Tibial artery (tissue), 4 donors: ENCODE measurements at regions of chr4 and their contacts with region 1.

Region 1: GRCh38 chr4:137124278-137124932 is 407.9 kb downstream of the PCDH18 start:
- DNase-seq: no peak
- H3K4me3 ChIP-seq: peak overlapping the region; percentile 48 to 55
- H3K27ac ChIP-seq: peak overlapping the region; percentile 33 to 35
- H3K4me1 ChIP-seq: peaks cover 0 to 4% (median 0%) of the 10 kb centered on the region in 4 donors
- H3K27me3 ChIP-seq: no peaks in the 10 kb centered on the region
- CTCF ChIP-seq: peak; percentile 65 to 71

Region 2: DNA sequence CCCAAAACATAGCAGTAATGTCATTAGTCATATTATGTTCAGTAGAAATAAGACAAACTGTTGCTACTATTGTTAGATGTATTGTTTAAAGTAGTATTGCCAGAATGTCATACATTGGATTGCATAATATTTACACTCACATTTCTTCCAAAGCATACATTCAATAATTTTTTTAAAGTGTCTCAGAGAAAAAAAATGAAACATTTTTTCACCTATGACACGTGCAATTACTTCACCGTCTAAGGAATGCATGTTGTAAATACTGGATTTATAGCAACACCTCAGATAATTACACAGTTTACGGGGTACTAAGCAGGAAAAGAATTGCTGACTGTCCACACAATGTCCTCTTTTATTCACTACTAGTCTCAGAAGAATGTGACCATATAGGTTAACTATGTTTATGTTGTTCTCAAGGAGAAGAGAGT is 245.8 kb after region 1 on chr4:
- intact Hi-C with region 1: no loop called
- DNase-seq: no peak
- H3K4me3 ChIP-seq: no peak overlapping the region
- H3K27ac ChIP-seq: peak overlapping the region in 1 of 2 donors; percentile 53
- H3K4me1 ChIP-seq: peaks cover 0 to 43% (median 18%) of the 10 kb centered on the region in 4 donors
- H3K27me3 ChIP-seq: no peaks in the 10 kb centered on the region
- CTCF ChIP-seq: no peak

Region 3: GRCh38 chr4:137861682-137862081 is 737.3 kb after region 1 on chr4:
- intact Hi-C with region 1: loop called (anchors 5 kb)
- DNase-seq: no peak
- H3K4me3 ChIP-seq: no peak overlapping the region
- H3K27ac ChIP-seq: no peak overlapping the region
- H3K4me1 ChIP-seq: no peaks in the 10 kb centered on the region
- H3K27me3 ChIP-seq: no peaks in the 10 kb centered on the region
- CTCF ChIP-seq: peak; percentile 48 to 52

Region 4: DNA sequence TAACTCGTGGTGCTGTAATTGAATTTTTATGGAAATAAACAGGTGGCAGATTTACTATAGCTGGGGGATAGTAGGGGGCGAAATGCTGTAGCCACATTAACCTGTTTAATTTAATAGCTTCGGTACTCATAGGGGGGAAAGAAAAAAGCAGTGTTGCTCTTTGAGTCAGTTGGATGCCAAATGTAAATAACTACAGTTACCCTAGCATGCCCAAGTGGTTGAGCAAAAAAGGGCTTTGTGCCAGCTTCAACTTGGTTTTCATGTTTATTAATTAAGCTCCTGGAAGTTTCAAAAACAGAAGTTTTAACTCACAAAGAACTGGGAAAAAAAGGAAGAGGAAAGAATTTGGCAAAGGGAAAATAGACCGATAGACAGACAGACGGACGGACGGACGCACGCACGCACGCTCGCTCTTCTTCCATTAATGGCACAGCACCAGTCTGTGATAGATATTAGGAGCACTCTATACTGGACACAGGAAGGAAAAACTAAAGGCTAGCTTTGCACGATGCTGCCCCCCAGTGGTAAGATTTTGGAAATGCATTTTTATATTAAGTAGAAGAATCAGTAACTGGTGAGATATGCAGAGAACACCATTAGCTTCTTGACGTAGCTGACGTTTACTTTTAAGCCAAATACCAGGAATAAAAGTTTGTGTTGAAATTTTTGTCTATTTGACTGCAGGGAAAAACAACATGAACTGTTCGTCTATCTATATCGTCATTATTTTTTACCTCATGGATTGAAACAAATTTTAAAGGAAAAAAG is 965.9 kb after region 1 on chr4:
- intact Hi-C with region 1: loop called (anchors 10 kb)
- DNase-seq: no peak
- H3K4me3 ChIP-seq: peak overlapping the region; percentile 18 to 40
- H3K27ac ChIP-seq: peak overlapping the region in 1 of 2 donors; percentile 22
- H3K4me1 ChIP-seq: peaks cover 0 to 42% (median 20%) of the 10 kb centered on the region in 4 donors
- H3K27me3 ChIP-seq: no peaks in the 10 kb centered on the region
- CTCF ChIP-seq: peak; percentile 72 to 77

Region 5: DNA sequence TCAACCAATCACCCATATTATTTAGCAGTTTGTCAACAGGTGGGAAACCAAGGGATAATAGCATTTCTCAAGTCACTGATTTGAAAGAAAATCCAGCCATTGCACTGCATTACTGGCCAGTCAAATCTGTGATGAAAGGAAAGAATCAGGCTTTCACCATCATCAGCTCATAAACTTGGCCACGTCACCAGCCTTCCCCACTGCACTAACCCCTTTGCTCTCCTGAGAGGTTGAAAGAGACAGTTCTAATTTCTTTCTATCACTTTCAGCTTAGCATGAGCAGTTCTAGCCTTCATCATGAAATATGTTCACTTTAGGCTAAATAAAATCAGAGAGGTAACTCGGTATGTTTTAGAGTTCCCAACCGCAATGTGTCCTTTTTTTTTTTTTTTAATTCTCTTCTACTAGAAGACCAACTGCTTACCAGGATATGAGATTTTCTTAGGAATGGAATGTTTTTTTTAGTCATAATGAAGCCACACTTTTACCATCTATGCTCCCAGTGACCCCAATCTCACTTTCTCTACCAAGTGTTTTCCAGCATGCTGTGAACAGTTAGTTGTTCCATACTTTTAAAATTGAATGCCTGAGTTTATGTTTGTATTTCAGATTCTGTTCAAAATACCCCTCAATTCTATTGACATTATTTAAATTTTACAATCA is 1173.5 kb after region 1 on chr4:
- intact Hi-C with region 1: no loop called
- DNase-seq: no peak
- H3K4me3 ChIP-seq: no peak overlapping the region
- H3K27ac ChIP-seq: no peak overlapping the region
- H3K4me1 ChIP-seq: no peaks in the 10 kb centered on the region
- H3K27me3 ChIP-seq: no peaks in the 10 kb centered on the region
- CTCF ChIP-seq: no peak

Region 6: DNA sequence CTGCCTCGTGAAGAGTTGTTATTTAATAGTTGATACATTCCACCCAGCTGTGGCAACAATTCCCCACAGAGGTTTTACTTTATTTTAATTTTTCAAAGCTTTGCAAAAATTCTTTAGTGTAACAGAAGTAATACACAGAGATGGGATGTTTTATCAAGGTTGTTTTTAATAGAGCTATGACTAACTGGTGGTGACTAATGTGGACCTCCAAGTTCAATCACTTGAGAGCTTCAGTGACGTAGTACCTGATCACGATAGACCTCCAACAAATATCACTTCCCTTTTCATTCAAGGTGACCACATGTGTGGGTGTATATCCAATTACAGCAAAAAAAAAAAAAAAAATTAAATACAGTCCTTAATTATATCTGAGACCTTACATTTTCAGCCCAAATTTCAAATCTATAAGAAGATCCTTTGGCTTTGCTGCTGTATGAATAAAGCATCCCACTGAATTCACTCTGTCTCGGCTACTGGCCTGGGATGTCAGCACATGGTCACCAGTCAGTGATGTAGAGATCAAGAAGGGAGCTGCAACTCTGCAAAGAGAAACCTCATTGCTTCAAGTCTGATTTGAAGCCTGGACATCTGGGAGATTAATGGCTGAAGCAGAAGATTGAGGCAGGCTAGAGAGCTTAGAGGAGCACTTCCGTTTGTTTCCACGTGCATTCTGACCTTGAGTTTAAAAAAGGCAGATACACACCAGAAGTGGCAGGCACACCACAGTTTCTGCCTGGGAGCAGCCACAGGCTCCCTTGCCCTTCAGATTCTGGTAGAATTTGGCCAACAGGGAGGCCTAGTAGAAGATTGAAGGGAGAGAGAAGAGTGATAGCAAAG is 1545.3 kb after region 1 on chr4:
- intact Hi-C with region 1: loop called (anchors 10 kb)
- DNase-seq: no peak
- H3K4me3 ChIP-seq: no peak overlapping the region
- H3K27ac ChIP-seq: no peak overlapping the region
- H3K4me1 ChIP-seq: peaks cover 0 to 40% (median 14%) of the 10 kb centered on the region in 4 donors
- H3K27me3 ChIP-seq: no peaks in the 10 kb centered on the region
- CTCF ChIP-seq: no peak